Activated T-helper 1 cell treated with anti-CD3 and anti-CD28 coated beads, Interleukin-12 subunit alpha, Interleukin-12 subunit beta, Interleukin-2, Interleukin-4 antibody, amounts not matched to agents 30 ng/mL and 10 ng/mL and 1 ng/mL, durations not matched to agents 14 hours and 24 hours and 36 hours (primary cell): ENCODE measurements at regions of chr17 and their contacts with region 1.

Region 1: DNA sequence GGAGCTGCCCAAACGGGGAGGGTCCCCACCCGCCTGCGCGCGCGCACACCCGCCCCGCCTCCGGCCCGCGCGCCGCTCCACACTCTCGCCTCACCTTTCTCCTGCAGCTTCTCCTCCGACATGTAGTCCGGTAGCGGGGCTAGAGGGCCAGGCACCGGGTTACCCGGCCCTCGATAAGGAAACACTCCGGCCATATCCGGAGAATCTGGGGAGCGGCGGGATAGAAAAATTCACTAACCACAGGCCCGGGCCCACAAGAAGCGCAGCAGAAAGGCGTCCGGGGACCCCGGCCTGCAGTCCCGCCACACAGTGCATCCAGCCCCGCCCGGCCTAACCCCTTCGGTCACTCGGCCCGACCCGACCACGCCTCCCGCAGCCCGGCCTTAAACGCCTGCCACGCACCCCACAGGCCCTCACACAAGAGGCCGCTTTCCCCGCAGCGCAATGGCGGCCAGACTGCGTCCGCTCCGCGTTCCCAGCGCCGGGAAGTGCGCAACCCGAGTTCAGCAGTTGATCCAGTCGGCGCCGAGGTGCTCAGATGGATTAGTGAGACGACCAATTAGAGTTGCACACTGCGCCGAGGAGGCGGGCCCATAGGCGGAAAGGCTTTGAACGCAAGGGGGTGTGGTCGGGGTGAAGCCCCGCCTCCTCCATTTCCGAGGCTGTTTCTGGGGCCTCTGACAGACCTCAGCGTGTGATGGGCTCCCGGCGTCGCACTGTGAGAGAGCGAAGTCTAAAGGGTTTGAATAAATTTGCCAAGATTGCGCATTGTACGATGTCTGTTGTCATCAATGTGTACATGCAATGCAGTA is at the start of gene PRPF8:
- DNase-seq: peak; percentile 98
- H3K4me3 Mint-ChIP-seq: peak within 1 kb of the TSS; percentile 97
- H3K27ac Mint-ChIP-seq: peak within 1 kb of the TSS; percentile 93
- H3K4me1 Mint-ChIP-seq: peaks cover 36% of the 10 kb centered on the region
- H3K27me3 Mint-ChIP-seq: no peaks in the 10 kb centered on the region
- total RNA-seq, gene PRPF8: 405 and 410 TPM in 2 replicates

Region 2: DNA sequence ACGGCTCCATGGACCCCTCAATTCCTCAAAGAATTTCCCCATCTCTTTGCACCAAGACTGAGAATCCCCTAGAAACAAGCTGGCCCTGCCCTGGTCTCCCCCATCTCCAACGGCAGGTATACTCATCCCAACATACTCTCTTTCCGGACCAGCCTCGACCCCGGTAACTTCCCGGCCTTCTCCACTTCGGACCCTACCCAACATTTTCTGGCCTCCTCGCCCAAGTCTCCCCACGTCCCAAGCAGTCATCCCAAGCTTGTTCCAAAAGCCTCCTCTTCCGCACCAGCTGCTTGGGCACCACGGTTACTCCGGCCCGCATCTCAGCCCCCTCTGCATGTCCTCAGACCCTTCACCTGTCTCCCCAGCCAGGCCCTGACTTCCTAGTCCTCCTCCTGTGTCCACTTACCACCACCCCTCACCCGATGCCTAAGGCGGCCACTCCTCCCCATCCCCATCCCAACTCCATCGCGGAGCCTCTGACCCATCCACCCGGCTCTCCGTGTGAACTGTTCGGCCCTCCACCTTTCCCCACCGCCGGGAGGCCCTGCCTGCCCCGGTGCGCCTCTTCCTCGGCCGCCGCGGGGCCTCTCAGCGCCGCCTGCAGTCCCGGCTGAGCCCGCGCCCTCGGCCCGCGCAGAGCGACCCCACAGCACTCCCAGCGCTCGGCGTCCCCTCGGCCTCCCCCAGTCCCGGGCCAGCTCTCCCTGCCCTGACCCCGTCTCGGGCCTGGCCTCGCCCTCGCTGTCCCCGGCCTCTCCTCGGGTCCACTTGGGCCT is 123.0 kb before region 1 on chr17:
- intact Hi-C with region 1: no loop called
- DNase-seq: peak; percentile 27
- H3K4me3 Mint-ChIP-seq: peak overlapping the region; percentile 88
- H3K27ac Mint-ChIP-seq: peak overlapping the region; percentile 61
- H3K4me1 Mint-ChIP-seq: peaks cover 40% of the 10 kb centered on the region
- H3K27me3 Mint-ChIP-seq: peaks cover 11% of the 10 kb centered on the region

Region 3: DNA sequence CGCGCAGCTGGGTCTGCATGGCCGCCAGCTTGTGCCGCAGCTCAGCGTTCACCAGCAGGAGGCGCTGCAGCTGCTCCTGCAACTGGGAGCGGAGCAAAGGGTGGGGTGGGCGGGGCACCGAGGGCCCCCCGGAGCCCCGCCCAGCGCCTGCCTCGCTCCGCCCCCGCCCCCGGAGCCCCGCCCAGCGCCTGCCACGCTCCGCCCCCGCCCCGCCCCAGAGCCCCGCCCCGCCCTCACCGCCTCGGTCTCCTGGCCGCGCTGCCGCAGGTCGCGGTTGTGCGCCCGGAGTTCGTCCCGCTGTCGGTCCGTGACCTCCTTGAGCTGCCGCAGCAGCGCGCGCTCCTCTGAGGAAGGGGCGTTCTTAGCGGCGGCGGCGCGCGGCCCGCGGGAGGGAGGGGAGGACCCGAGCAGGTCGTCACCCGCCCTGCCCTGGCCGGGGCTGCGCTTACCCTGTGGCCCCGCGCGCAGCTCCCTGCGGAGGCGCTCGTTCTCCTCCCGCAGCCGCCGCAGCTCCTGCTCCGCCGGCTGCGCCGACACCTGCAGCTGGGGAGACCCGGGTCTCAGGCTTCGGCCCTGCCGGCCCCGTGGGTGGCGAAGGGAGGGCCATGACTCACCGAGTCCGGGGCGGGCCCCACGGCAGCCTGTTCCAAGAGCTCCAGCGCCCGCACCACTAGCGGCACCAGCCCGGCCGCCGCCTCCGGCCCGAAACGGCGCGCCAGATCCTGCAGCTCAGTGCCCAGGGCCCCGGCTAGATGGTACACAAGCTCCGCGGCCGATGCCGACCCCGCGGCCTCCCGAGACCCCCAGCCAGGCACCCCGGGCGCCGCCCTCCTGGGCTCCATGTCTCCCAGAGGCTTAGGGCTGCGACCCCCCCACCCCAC is 35.4 kb before region 1 on chr17:
- intact Hi-C with region 1: loop called (anchors 1 kb)
- DNase-seq: peak; percentile 92
- H3K4me3 Mint-ChIP-seq: peak overlapping the region; percentile 59
- H3K27ac Mint-ChIP-seq: no peak overlapping the region
- H3K4me1 Mint-ChIP-seq: peaks cover 22% of the 10 kb centered on the region
- H3K27me3 Mint-ChIP-seq: peaks cover 2% of the 10 kb centered on the region

Region 4: DNA sequence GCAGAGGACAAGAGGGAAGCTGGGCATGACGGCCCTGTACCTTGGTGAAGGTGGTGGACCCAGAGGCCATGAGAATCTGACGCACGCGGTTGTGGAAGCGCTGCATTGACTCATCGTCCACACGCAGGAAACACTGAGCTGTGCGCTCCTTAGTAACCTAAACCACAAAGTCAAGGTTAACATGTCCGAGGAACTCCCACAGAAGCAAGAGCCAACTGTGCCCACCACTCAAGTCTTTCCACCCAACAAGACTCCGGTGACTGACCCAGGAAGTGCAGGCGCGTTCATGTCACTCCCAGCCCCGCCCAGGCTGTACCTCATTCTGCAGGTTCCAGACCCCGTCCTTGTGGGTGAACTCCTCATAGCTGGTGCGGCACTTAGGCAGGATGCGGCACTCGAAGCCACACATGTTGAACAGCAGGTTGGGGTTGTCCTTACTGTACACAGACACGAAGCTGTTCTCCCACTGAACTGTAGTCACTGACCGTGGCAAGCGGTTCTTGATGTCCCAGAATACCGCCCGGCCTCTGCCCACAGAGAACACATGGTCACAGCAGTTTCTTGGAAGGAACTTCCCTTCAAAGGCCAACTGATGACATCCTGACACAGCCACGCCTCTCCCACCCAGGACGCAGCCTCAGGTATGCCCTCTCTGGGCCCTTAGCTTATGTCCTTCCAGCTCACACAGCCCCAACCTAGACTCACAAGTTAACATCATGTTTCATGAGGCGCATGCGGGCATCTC is 11.4 kb before region 1 on chr17:
- intact Hi-C with region 1: no loop called
- DNase-seq: no peak
- H3K4me3 Mint-ChIP-seq: no peak overlapping the region
- H3K27ac Mint-ChIP-seq: no peak overlapping the region
- H3K4me1 Mint-ChIP-seq: peaks cover 14% of the 10 kb centered on the region
- H3K27me3 Mint-ChIP-seq: no peaks in the 10 kb centered on the region

Region 5: GRCh38 chr17:2157675-2158395 is 473.3 kb after region 1 on chr17:
- intact Hi-C with region 1: no loop called
- DNase-seq: no peak
- H3K4me3 Mint-ChIP-seq: no peak overlapping the region
- H3K27ac Mint-ChIP-seq: peak overlapping the region; percentile 56
- H3K4me1 Mint-ChIP-seq: peaks cover 25% of the 10 kb centered on the region
- H3K27me3 Mint-ChIP-seq: no peaks in the 10 kb centered on the region